ENCODE measurements at regions of chr17 and their contacts with region 1.

Region 1: GRCh38 chr17:1829592-1830257 is at the starts of genes RPA1 and SMYD4:
- DNase-seq: peak; percentile 91
- H3K4me3 Mint-ChIP-seq: peak within 1 kb of the TSS; percentile 92
- H3K27ac Mint-ChIP-seq: peak within 1 kb of the TSS; percentile 90
- H3K4me1 Mint-ChIP-seq: peaks cover 50% of the 10 kb centered on the region
- H3K27me3 Mint-ChIP-seq: no peaks in the 10 kb centered on the region
- total RNA-seq, gene RPA1: 266 and 269 TPM in 2 replicates
- total RNA-seq, gene SMYD4: 28.4 and 33.4 TPM in 2 replicates

Region 2: GRCh38 chr17:1648963-1649843 is 180.5 kb before region 1 on chr17:
- intact Hi-C with region 1: loop called (anchors 2 kb)
- DNase-seq: peak; percentile 92
- H3K4me3 Mint-ChIP-seq: peak overlapping the region; percentile 59
- H3K27ac Mint-ChIP-seq: no peak overlapping the region
- H3K4me1 Mint-ChIP-seq: peaks cover 22% of the 10 kb centered on the region
- H3K27me3 Mint-ChIP-seq: peaks cover 2% of the 10 kb centered on the region

Region 3: DNA sequence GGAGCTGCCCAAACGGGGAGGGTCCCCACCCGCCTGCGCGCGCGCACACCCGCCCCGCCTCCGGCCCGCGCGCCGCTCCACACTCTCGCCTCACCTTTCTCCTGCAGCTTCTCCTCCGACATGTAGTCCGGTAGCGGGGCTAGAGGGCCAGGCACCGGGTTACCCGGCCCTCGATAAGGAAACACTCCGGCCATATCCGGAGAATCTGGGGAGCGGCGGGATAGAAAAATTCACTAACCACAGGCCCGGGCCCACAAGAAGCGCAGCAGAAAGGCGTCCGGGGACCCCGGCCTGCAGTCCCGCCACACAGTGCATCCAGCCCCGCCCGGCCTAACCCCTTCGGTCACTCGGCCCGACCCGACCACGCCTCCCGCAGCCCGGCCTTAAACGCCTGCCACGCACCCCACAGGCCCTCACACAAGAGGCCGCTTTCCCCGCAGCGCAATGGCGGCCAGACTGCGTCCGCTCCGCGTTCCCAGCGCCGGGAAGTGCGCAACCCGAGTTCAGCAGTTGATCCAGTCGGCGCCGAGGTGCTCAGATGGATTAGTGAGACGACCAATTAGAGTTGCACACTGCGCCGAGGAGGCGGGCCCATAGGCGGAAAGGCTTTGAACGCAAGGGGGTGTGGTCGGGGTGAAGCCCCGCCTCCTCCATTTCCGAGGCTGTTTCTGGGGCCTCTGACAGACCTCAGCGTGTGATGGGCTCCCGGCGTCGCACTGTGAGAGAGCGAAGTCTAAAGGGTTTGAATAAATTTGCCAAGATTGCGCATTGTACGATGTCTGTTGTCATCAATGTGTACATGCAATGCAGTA is 145.1 kb before region 1 on chr17 and contains the start of gene PRPF8:
- intact Hi-C with region 1: loop called (anchors 1 kb)
- DNase-seq: peak; percentile 98
- H3K4me3 Mint-ChIP-seq: peak within 1 kb of the TSS; percentile 97
- H3K27ac Mint-ChIP-seq: peak within 1 kb of the TSS; percentile 93
- H3K4me1 Mint-ChIP-seq: peaks cover 36% of the 10 kb centered on the region
- H3K27me3 Mint-ChIP-seq: no peaks in the 10 kb centered on the region
- total RNA-seq, gene PRPF8: 405 and 410 TPM in 2 replicates

Region 4: GRCh38 chr17:1870592-1870991 is 40.9 kb after region 1 on chr17:
- intact Hi-C with region 1: loop called (anchors 1 kb)
- DNase-seq: peak; percentile 28
- H3K4me3 Mint-ChIP-seq: peak overlapping the region; percentile 62
- H3K27ac Mint-ChIP-seq: peak overlapping the region; percentile 99
- H3K4me1 Mint-ChIP-seq: peaks cover 75% of the 10 kb centered on the region
- H3K27me3 Mint-ChIP-seq: no peaks in the 10 kb centered on the region

Region 5: DNA sequence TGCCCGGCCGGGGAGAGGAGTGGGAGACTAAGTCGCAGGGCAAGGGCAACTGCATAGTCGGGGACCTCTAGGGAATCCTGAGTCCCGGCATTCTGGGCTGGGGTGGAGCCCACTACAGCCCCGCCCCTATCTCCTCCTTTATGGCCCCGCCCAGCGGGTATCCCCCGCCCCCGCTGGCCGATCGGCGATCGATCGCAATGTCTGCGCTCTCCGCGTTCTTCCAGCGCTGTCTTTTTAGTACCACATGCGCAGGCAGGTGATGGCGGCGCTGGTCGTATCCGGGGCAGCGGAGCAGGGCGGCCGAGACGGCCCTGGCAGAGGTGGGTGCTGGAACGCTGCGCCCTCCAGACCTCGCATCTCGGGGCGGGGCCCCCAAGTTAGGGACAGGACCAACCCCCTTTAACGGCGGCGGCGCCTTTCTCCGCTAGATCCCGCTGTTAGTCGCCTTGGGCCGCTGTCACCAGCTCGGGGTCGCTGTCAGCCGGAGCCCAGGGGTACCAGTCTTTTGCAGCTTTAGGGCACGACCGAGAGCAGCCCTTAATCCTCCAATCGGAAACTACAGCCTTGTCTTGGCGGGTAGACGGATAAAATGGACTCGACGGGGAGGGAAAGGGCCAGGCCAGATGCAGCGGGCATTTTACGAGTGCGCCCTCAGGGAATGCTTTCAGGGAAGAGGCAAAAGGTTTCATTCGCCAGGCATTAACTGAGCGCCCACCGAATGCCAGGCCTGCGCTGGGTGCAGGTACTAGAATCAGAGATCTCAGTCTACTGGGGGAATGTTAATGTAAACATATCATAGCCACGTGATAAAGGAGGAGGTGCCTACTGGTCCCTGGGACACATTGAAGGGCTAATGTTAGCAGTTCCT is 200.4 kb after region 1 on chr17 and contains the start of gene DPH1:
- intact Hi-C with region 1: loop called (anchors 1 kb)
- DNase-seq: peak; percentile 85
- H3K4me3 Mint-ChIP-seq: peak within 1 kb of the TSS; percentile 92
- H3K27ac Mint-ChIP-seq: peak within 1 kb of the TSS; percentile 75
- H3K4me1 Mint-ChIP-seq: peaks cover 13% of the 10 kb centered on the region
- H3K27me3 Mint-ChIP-seq: peaks cover 35% of the 10 kb centered on the region
- total RNA-seq, gene DPH1: 49.4 and 61.3 TPM in 2 replicates

Region 6: DNA sequence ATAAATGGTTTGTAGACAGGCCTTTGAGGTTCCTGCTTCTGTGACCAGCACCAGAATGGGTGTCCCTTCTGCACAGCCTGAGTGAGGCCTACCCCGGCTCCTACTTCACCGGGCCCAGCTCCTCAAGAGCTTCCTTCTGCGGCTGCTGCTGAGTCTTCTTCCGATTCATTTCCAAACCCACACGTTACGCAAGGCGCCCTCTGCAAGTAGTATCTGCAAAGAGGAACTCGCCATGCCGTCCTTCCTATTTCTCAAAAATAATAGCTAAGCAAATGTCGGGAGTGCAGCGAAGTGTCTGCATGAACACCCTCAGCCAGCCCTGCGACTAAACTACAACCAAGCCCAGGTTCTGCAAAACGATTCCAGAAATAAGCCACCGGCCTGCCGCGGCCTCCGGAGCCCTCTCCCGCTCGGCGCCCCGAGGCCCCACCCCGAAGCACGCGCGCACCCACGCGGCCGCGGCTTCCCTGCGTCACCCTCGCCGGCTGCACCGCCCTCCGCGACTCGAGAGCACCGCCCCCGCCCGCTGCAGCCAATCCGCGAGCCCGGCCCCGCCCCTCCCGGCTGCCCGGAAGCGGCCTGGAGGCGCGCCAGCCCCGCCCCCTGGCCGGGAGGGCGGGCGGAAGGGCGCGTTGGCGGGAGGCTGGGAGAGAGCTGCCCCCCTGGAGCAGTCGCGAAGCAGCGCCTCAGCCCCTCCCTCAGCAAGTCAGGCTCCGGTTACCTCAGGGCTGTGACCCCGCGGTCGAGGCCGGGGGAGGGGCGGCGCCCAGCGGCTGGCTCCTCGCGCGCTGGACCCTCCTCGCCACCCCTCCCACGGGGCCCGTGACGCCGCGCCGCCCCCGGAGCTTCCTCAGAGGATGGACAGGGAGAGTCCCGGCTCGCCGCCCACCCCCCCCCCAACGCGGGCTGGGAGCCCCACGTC is 562.8 kb after region 1 on chr17:
- intact Hi-C with region 1: loop called (anchors 5 kb)
- DNase-seq: peak; percentile 98
- H3K4me3 Mint-ChIP-seq: peak overlapping the region; percentile 88
- H3K27ac Mint-ChIP-seq: peak overlapping the region; percentile 96
- H3K4me1 Mint-ChIP-seq: peaks cover 34% of the 10 kb centered on the region
- H3K27me3 Mint-ChIP-seq: no peaks in the 10 kb centered on the region

Measured in activated T-helper 1 cell treated with anti-CD3 and anti-CD28 coated beads, Interleukin-12 subunit alpha, Interleukin-12 subunit beta, Interleukin-2, Interleukin-4 antibody, amounts not matched to agents 30 ng/mL and 10 ng/mL and 1 ng/mL, durations not matched to agents 14 hours and 24 hours and 36 hours (primary cell).